PC-3 (cell line): ENCODE measurements at regions of chr6 and their contacts with region 1.

Region 1: DNA sequence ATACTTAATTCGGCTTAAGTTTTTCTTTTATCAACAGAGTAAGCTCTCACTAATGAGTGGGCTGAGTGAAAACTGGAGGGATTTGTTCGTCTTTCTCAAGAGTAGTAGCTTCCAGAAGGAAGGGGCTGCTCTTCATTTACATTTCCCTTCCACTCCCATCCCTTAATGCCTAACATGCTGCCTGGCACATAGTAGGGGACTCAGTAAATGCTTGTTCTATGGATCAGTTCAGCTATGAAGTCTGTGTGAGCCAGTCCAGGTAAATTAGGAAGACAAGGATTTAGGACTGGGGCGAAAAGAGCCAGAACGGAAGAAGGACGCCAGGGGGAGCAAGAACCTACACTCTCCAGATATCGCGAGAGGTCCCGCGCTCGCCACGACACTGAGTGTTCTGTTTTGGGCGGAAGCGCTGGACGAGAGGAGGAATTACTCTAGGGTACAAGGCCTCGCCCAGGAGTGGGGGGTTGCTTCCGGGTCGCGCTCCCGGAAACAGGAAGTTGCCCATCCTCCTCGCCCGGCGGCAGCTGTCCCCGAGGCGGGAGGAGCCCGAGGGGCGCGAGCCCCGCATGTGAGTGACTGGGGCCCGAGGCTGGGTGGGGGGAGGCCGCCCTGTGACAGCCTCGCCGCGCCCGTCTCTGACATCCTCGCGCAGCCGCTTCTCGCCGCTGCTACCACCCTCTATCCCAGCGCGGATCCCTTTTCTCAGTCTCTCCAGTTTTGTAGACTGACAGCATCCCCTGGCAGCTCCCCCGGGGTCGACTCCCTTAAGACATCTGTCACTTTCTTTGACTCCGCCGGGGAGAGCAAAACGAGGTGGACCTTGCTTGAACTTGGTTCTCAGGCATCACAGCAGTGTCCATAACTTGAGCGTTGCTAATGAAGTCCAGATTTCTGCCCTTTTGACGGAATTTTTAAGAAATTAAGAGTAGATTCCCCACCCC is at the start of gene C6orf89:
- DNase-seq: peak; percentile 98
- ATAC-seq: peak; percentile 100
- H3K4me3 ChIP-seq: peak within 1 kb of the TSS; percentile 80
- H3K27ac ChIP-seq: 0 out of 2 replicates have a peak within 1 kb of the TSS, but pooled peaks have one; percentile 10
- H3K4me1 ChIP-seq: peaks cover 11% of the 10 kb centered on the region
- H3K27me3 ChIP-seq: no peaks in the 10 kb centered on the region
- CTCF ChIP-seq: peak; percentile 86
- total RNA-seq, gene C6orf89: 23.2 and 27.8 TPM in 2 replicates

Region 2: DNA sequence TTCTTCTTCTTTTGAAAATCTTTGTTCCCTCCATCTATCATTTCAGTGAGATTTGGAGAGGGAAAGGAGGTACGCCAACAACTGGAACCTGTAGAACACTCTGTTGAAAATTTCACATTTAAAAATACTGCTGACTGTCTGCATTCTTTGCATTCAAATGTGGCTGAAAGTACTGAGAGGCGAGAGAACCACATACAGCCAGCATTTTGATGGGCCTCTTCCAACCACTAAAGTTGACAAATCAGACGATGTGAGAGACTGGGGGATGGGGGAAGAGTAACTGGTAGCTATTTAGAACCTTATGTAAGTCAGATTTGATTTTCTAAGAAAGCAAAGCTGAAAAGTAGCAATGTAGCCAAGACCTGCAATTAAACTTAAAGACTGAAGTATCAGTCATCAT is 1274.5 kb before region 1 on chr6:
- CTCF ChIA-PET with region 1: no interaction called
- POLR2A ChIA-PET with region 1: no interaction called
- intact Hi-C with region 1: no loop called
- DNase-seq: no peak
- ATAC-seq: no peak
- H3K4me3 ChIP-seq: no peak overlapping the region
- H3K27ac ChIP-seq: no peak overlapping the region
- H3K4me1 ChIP-seq: no peaks in the 10 kb centered on the region; the same call in 1 of the 2 replicates
- H3K27me3 ChIP-seq: no peaks in the 10 kb centered on the region
- CTCF ChIP-seq: no peak

Region 3: DNA sequence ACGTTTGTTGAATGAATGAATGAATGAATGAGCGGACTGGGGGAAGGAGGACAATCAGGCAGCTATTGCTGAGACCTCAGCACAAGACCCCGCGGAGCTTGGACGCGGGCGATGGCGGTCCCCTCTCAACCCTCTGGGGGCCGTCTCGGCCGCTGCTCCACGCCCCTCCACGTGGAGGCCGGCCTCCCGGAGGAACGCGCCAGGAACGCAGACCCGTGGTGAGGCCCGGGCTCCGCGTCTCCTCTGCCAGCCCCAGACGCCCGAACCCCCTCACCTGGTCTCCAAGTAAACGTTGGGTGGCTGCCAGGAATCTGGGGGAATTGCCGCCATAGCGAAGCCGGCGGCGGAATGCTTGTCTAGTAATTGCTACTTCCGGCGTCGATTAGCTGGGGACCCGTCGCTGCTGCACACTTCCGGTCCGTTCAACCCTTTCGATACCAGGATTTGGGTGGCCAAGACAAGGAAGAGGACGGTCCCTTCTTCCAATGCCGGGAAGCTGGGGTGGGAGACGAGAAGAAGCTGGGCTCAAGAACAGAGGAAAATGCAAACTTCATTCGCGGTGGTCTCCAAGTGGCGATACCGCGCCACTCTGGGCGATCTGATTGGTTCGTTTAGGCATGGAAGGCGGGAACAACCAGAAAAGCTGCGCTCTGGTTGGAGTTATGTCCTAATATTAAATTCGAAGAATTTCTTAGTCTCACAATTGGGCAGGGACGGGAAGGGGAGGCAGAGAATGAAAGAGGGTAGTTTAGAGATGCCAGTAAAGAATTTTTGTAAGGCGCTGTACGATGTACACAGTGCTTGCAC is 11.1 kb before region 1 on chr6 and contains the start of gene PPIL1:
- CTCF ChIA-PET with region 1: interaction called, 3 read pairs
- POLR2A ChIA-PET with region 1: no interaction called
- intact Hi-C with region 1: loop called (anchors 1 kb)
- DNase-seq: peak; percentile 93
- ATAC-seq: peak; percentile 93
- H3K4me3 ChIP-seq: peak within 1 kb of the TSS; percentile 92
- H3K27ac ChIP-seq: peak within 1 kb of the TSS; percentile 86
- H3K4me1 ChIP-seq: peaks cover 18% of the 10 kb centered on the region
- H3K27me3 ChIP-seq: no peaks in the 10 kb centered on the region
- CTCF ChIP-seq: no peak
- total RNA-seq, gene PPIL1: 37.3 and 39.9 TPM in 2 replicates

Region 4: GRCh38 chr6:36912586-36912985 is 26.9 kb after region 1 on chr6:
- CTCF ChIA-PET with region 1: interaction called, 4 read pairs
- POLR2A ChIA-PET with region 1: no interaction called
- intact Hi-C with region 1: loop called (anchors 1 kb)
- DNase-seq: peak; percentile 96
- ATAC-seq: peak; percentile 88
- H3K4me3 ChIP-seq: peak overlapping the region; percentile 35; the same call in 1 of the 2 replicates
- H3K27ac ChIP-seq: peak overlapping the region; percentile 66
- H3K4me1 ChIP-seq: peaks cover 52% of the 10 kb centered on the region
- H3K27me3 ChIP-seq: no peaks in the 10 kb centered on the region
- CTCF ChIP-seq: peak; percentile 40; the same call in 1 of the 2 replicates

Region 5: GRCh38 chr6:36969240-36969691 is 83.5 kb after region 1 on chr6:
- CTCF ChIA-PET with region 1: no interaction called
- POLR2A ChIA-PET with region 1: no interaction called
- intact Hi-C with region 1: no loop called
- DNase-seq: no peak
- ATAC-seq: no peak
- H3K4me3 ChIP-seq: no peak overlapping the region
- H3K27ac ChIP-seq: no peak overlapping the region
- H3K4me1 ChIP-seq: no peaks in the 10 kb centered on the region
- H3K27me3 ChIP-seq: no peaks in the 10 kb centered on the region
- CTCF ChIP-seq: no peak

Region 6: DNA sequence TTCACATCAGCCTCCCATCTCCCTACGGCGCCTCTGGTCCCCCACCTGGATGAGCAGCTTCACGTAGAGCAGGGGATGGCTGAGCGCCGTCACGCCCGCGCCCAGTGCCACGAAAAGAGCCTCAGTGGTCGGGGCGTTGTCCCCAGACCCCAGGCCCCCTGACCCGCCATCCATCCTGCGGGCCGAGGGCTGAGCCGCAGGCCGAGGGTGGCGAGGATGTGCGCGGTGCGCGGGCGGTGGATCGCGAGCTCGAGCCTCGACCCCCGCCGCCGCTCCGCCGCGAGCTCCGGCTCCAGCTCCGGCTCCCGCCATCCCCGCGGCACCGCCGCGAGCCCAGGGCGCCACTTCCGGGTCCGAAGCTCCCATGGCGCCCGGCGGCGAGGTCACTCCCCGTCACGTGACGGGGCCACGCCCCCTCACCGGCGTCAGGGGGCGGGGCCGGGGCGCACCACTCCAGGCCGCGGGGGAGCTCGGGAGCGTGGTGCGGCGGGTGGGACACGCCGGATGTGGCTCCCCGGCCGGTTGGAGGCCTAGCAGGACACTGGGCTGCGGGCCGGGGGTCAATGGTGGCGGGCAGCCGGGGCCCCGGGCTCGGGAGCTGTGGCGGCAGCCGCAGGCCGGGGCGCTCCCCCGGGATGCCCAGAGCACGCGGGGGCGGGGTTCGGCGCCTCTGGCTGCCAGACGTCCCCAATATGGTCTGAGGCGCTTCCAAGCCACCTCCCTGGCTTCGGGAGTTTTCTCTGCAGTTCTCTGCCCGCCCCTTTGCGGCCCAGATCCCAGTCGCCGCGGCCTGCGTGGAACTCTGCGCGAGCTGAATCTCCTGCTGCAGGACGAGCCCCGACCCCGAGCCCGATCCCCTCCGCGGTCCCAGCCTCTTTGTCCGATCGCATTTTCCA is 100.3 kb after region 1 on chr6 and contains the start of gene MTCH1:
- CTCF ChIA-PET with region 1: no interaction called
- POLR2A ChIA-PET with region 1: no interaction called
- intact Hi-C with region 1: loop called (anchors 10 kb)
- DNase-seq: peak; percentile 92
- ATAC-seq: peak; percentile 89
- H3K4me3 ChIP-seq: peak within 1 kb of the TSS; percentile 99
- H3K27ac ChIP-seq: peak within 1 kb of the TSS; percentile 52
- H3K4me1 ChIP-seq: peaks cover 24% of the 10 kb centered on the region
- H3K27me3 ChIP-seq: no peaks in the 10 kb centered on the region
- CTCF ChIP-seq: no peak
- total RNA-seq, gene MTCH1: 253 and 264 TPM in 2 replicates

Region 7: DNA sequence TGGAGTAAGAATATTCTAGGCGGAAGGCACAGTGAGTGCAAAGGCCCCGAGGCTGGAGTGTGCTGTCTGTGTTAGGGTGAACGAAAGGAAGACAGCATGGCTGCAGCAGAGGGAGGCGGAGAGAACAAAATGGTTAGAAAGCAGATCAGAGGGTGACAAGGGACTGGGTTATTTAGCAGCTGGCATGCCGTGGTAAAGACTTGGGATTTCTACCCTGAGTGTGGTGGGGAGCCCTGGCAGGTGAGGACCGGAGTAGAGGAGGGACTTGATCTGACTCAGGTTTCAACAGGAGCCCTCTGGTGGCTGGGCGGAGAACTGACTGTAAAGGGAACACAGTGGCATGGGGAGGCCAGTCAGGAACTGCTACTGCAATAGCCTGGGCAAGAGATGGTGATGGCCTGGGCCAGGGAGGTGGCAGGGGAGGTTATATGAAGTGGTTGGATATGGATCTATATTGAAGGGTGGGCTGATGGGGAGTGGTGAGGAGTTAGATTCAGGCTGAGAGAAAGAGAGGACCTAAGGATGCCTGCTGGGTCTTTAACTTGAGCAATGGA is 322.2 kb after region 1 on chr6:
- CTCF ChIA-PET with region 1: no interaction called
- POLR2A ChIA-PET with region 1: no interaction called
- intact Hi-C with region 1: loop called (anchors 10 kb)
- DNase-seq: peak; percentile 90
- ATAC-seq: peak; percentile 80
- H3K4me3 ChIP-seq: no peak overlapping the region
- H3K27ac ChIP-seq: no peak overlapping the region
- H3K4me1 ChIP-seq: peaks cover 7% of the 10 kb centered on the region; the same call in 1 of the 2 replicates
- H3K27me3 ChIP-seq: no peaks in the 10 kb centered on the region
- CTCF ChIP-seq: peak; percentile 90

Region 8: GRCh38 chr6:37242429-37243052 is 356.8 kb after region 1 on chr6:
- CTCF ChIA-PET with region 1: no interaction called
- POLR2A ChIA-PET with region 1: interaction called, 16 read pairs
- intact Hi-C with region 1: no loop called
- DNase-seq: peak; percentile 93
- ATAC-seq: peak; percentile 88
- H3K4me3 ChIP-seq: 0 out of 2 replicates have a peak overlapping the region, but pooled peaks have one; percentile 28
- H3K27ac ChIP-seq: peak overlapping the region; percentile 93
- H3K4me1 ChIP-seq: peaks cover 36% of the 10 kb centered on the region
- H3K27me3 ChIP-seq: no peaks in the 10 kb centered on the region
- CTCF ChIP-seq: no peak